GM23248 (cell line): ENCODE measurements at regions of chr10 and their contacts with region 1.

Region 1: GRCh38 chr10:72215652-72216549 is at the starts of genes ANAPC16 and ASCC1:
- DNase-seq: peak; percentile 95
- H3K4me3 ChIP-seq: peak within 1 kb of the TSS; percentile 94
- H3K27ac ChIP-seq: peak within 1 kb of the TSS; percentile 94
- H3K4me1 ChIP-seq: peaks cover 16% of the 10 kb centered on the region; the same call in 1 of the 2 replicates
- H3K27me3 ChIP-seq: no peaks in the 10 kb centered on the region
- total RNA-seq, gene ANAPC16: 61.1 and 69.6 TPM in 2 replicates
- total RNA-seq, gene ASCC1: 21.5 and 25.2 TPM in 2 replicates

Region 2: DNA sequence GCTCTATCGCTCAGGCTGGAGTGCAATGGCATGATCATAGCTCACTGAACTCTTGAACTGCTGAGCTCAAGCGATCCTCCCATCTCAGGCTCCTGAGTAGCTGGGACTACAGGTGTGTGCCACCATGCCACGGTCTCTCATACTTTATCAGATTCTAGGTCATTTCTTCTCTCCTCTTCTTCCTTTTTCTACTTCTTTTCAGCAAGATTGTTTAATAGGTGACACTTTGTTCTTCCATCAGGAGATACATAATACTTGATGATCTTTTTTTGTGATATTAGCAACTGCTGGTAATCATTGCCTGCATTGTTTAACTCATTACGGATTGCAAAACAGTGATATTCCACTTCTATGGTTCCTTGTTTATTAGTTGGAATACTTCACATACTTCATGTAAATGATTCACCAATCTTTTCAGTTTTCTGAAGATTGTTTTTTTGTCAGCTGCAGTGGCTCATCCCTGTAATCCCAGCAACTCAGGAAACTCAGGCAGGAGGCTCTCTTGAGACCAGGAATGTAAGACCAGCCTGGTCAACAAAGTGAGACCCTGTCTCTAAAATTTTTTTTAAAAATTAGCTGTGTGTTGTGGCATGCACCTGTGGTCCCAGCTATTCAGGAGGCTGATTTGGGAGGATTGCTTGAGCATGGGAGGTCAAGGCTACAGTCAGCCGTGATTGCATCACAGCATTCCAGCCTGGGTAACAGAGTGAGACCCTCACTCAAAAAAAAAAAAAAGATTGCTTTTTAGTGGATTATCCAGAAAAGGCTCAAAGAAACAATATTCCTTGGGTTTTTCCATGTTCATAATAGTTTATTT is 287.9 kb before region 1 on chr10:
- in situ Hi-C with region 1: loop called (anchors 25 kb)
- DNase-seq: peak; percentile 67
- H3K4me3 ChIP-seq: no peak overlapping the region
- H3K27ac ChIP-seq: no peak overlapping the region
- H3K4me1 ChIP-seq: peaks cover 11% of the 10 kb centered on the region
- H3K27me3 ChIP-seq: no peaks in the 10 kb centered on the region